Right ventricle myocardium superior (tissue), 1 donor: ENCODE measurements at regions of chr6 and their contacts with region 1.

Region 1: GRCh38 chr6:166619912-166620311 is 7.1 kb downstream of the RPS6KA2 start:
- DNase-seq: no peak
- ATAC-seq: peak; percentile 68

Region 2: GRCh38 chr6:166572370-166573261 is 47.3 kb before region 1 on chr6:
- intact Hi-C with region 1: loop called (anchors 5 kb)
- DNase-seq: no peak
- ATAC-seq: peak; percentile 52